ENCODE measurements at regions of chr9 and their contacts with region 1.

Region 1: DNA sequence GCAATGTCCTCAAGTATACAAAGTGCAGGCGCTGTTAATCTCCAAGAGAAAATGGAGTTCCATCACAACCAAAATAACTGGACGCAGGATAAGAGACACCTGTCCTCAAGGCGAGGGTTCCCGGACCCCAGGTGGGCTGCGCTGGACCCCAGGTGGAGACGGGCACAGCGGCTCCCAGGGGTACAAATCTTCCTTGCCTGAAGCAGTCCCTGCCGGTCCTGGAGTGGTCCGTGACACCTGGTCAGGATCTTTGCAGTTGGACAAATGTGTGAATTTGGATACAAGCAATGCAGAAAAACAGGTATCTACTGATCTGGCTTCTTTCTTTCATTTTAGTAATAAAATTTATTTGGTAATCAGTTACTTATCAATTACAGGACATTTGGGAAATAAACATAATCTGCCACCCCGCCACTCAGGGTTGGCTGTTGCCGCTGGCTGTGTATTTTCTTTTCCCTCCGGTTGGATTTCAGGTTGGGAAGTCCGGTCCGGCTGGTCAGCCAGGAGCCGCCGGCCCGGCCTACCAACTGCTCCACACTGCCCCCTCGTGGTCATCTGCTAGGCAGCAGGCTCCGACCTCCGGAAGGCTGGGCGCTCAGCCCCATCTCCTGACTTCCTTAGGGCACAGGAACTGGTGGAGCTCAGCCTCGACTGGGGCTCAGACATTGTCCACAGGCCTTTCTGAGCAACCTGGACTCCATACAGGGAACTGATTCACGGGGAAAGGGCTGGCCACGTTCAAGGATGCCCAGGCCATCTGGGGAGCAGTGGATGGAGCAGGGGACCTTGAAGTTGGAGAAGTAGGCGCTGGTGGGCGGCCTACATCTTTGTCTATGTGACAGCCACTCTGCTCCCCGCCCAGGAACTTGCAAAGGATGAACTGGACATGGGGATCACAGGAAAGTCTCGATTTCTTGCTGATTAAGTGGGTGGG is 43.4 kb downstream of the NXNL2 start:
- DNase-seq: peak; percentile 66 to 81
- H3K4me3 ChIP-seq: no peak overlapping the region
- H3K4me3 Mint-ChIP-seq: no peak overlapping the region
- H3K27ac Mint-ChIP-seq: no peak overlapping the region
- H3K4me1 ChIP-seq: no peaks in the 10 kb centered on the region
- H3K4me1 Mint-ChIP-seq: no peaks in the 10 kb centered on the region
- H3K27me3 ChIP-seq: no peaks in the 10 kb centered on the region
- H3K27me3 Mint-ChIP-seq: no peaks in the 10 kb centered on the region
- CTCF ChIP-seq: peak; percentile 72 to 81

Region 2: DNA sequence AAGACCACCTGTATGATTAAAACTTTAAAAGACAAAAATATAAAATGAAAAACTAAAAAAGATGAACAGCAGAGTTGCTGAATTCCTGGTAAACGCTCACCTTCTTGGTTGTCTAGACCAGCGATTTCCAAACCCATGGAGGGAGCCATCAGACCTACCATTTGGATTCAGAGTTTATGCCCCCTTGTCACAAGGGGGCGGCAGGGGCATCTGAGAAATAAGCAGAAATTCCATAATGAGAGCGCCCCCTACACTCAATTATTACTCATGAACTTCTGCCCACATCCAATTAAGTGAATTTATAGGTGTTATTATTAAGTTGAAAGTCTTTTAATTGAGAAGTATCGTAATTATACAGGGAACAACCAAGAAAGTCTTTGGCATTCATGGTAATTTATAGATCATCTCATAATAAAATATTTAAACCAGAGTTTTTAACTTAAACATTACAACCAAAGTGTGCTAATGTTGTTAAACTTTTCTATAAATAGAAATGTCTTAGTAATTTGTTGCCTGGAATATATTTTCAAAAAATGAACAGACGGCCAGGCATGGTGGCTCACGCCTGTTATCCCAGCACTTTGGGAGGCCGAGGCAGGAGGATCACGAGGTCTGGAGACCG is 404.9 kb before region 1 on chr9:
- CTCF ChIA-PET with region 1: no interaction called
- POLR2A ChIA-PET with region 1: no interaction called
- intact Hi-C with region 1: loop called (anchors 5 kb)
- DNase-seq: peak; percentile 56 to 57
- H3K4me3 ChIP-seq: no peak overlapping the region
- H3K4me3 Mint-ChIP-seq: no peak overlapping the region
- H3K27ac Mint-ChIP-seq: no peak overlapping the region
- H3K4me1 ChIP-seq: no peaks in the 10 kb centered on the region
- H3K4me1 Mint-ChIP-seq: no peaks in the 10 kb centered on the region
- H3K27me3 ChIP-seq: no peaks in the 10 kb centered on the region
- H3K27me3 Mint-ChIP-seq: no peaks in the 10 kb centered on the region
- CTCF ChIP-seq: peak; percentile 61 to 76

Region 3: GRCh38 chr9:88280816-88281382 is 297.5 kb before region 1 on chr9:
- CTCF ChIA-PET with region 1: interaction called, 3 read pairs
- POLR2A ChIA-PET with region 1: no interaction called
- intact Hi-C with region 1: loop called (anchors 5 kb)
- DNase-seq: peak; percentile 25 to 42
- H3K4me3 ChIP-seq: no peak overlapping the region
- H3K4me3 Mint-ChIP-seq: no peak overlapping the region
- H3K27ac Mint-ChIP-seq: no peak overlapping the region
- H3K4me1 ChIP-seq: no peaks in the 10 kb centered on the region; the same call in 1 of the 2 replicates
- H3K4me1 Mint-ChIP-seq: no peaks in the 10 kb centered on the region
- H3K27me3 ChIP-seq: no peaks in the 10 kb centered on the region
- H3K27me3 Mint-ChIP-seq: no peaks in the 10 kb centered on the region
- CTCF ChIP-seq: peak in 1 of 2 experiments; percentile 21

Region 4: GRCh38 chr9:88514247-88514646 is 64.1 kb before region 1 on chr9:
- CTCF ChIA-PET with region 1: no interaction called
- POLR2A ChIA-PET with region 1: no interaction called
- intact Hi-C with region 1: no loop called
- DNase-seq: no peak
- H3K4me3 ChIP-seq: no peak overlapping the region
- H3K4me3 Mint-ChIP-seq: peak overlapping the region; percentile 16
- H3K27ac Mint-ChIP-seq: no peak overlapping the region
- H3K4me1 ChIP-seq: peaks cover 9% of the 10 kb centered on the region
- H3K4me1 Mint-ChIP-seq: peaks cover 22% of the 10 kb centered on the region
- H3K27me3 ChIP-seq: no peaks in the 10 kb centered on the region
- H3K27me3 Mint-ChIP-seq: no peaks in the 10 kb centered on the region
- CTCF ChIP-seq: no peak

Region 5: DNA sequence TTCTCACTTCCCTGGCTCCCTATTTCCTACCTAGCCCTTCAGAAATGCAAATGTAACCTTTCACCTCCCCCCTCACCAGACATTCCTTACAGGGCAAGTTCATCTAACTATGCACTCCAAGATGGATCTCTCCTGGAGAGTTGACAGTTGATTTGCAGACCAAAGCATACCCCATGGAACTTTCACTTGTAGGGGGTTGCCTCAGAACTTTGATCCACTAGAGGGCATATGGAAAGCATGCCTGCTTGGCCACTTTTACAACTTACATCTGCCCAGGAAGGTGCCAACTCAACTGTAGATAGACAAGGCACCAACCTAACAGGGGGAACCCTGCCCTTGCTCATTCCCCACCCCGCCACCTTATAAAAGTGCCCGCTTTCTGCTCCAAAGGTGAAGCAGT is 144.4 kb after region 1 on chr9:
- CTCF ChIA-PET with region 1: no interaction called
- POLR2A ChIA-PET with region 1: no interaction called
- intact Hi-C with region 1: no loop called
- DNase-seq: no peak
- H3K4me3 ChIP-seq: no peak overlapping the region
- H3K4me3 Mint-ChIP-seq: no peak overlapping the region
- H3K27ac Mint-ChIP-seq: no peak overlapping the region
- H3K4me1 ChIP-seq: no peaks in the 10 kb centered on the region
- H3K4me1 Mint-ChIP-seq: no peaks in the 10 kb centered on the region
- H3K27me3 ChIP-seq: no peaks in the 10 kb centered on the region
- H3K27me3 Mint-ChIP-seq: peaks cover 3% of the 10 kb centered on the region
- CTCF ChIP-seq: no peak

Measured in Caco-2 (cell line).